Breast epithelium (tissue), 4 donors: ENCODE measurements at regions of chr3 and their contacts with region 1.

Region 1: DNA sequence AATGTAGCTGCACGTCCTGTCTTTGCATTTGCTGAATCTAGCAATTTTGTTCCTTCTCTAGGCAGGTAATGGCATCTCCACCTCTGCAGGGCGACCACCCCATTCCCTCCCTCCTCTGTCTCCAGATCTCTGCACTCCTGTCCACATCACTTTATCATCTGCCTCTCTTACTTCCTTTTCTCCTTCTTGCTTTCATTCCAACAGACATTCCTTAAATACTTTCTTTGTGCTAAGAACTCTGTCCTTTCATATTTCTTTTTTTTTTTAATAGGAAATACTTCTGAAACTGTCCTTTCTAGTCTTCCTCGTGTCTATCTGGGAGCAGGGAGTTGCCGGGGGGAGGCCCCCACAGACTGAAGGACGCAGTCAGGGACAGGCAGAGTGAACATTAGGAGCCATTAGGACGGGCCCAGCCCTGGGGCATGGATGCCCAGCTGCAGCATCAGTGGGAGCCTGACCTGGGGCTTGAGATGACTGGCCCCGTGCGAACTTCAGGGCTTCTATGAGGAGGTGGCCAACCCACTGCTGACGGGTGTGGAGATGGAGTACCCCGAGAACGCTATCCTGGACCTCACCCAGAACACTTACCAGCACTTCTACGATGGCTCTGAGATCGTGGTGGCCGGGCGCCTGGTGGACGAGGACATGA is 7.4 kb downstream of the ITIH3 start:
- DNase-seq: no peak
- H3K4me3 ChIP-seq: no peak overlapping the region
- H3K27ac ChIP-seq: no peak overlapping the region
- H3K4me1 ChIP-seq: no peaks in the 10 kb centered on the region
- H3K27me3 ChIP-seq: no peaks in the 10 kb centered on the region
- CTCF ChIP-seq: no peak
- POLR2A ChIP-seq: no peak

Region 2: GRCh38 chr3:52831500-52832301 is 29.7 kb after region 1 on chr3:
- intact Hi-C with region 1: no loop called
- DNase-seq: peak; percentile 37 to 73
- H3K4me3 ChIP-seq: peak overlapping the region in 1 of 3 donors; percentile 33
- H3K27ac ChIP-seq: peak overlapping the region; percentile 45 to 75
- H3K4me1 ChIP-seq: peaks cover 0 to 5% of the 10 kb centered on the region in 2 donors
- H3K27me3 ChIP-seq: no peaks in the 10 kb centered on the region
- CTCF ChIP-seq: peak in 1 of 3 donors; percentile 4
- POLR2A ChIP-seq: no peak

Region 3: GRCh38 chr3:52845691-52846431 is 43.9 kb after region 1 on chr3:
- intact Hi-C with region 1: loop called (anchors 1 kb)
- DNase-seq: no peak
- H3K4me3 ChIP-seq: no peak overlapping the region
- H3K27ac ChIP-seq: peak overlapping the region in 1 of 2 donors; percentile 8
- H3K4me1 ChIP-seq: no peaks in the 10 kb centered on the region
- H3K27me3 ChIP-seq: no peaks in the 10 kb centered on the region
- CTCF ChIP-seq: no peak
- POLR2A ChIP-seq: no peak